PC-9 (cell line): ENCODE measurements at regions of chr5 and their contacts with region 1.

Region 1: GRCh38 chr5:26245321-26245720 is 793.1 kb downstream of the CDH9 start:
- DNase-seq: no peak
- H3K4me3 ChIP-seq: no peak overlapping the region
- H3K27ac ChIP-seq: no peak overlapping the region
- H3K4me1 ChIP-seq: no peaks in the 10 kb centered on the region
- H3K27me3 ChIP-seq: no peaks in the 10 kb centered on the region
- CTCF ChIP-seq: no peak

Region 2: DNA sequence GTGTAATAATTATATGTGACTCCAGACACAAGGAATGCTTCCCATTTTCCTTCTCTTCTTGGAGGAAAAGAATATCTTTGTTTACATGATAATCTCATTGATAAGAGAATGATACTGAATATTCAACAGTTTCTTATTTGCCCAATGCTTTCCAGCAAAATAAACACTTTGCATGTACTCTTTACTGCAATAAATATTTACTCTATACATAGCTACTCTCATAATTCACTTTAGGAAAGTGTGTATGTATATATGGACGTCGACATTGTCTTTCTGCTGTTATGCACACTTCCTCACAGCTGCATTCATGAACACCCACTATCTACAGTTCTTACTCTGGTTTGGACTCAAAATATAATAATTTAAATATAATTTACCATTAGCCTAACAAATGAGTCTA is 983.1 kb before region 1 on chr5:
- CTCF ChIA-PET with region 1: no interaction called
- POLR2A ChIA-PET with region 1: interaction called, 13 read pairs
- intact Hi-C with region 1: no loop called
- DNase-seq: no peak
- H3K4me3 ChIP-seq: no peak overlapping the region
- H3K27ac ChIP-seq: no peak overlapping the region
- H3K4me1 ChIP-seq: no peaks in the 10 kb centered on the region
- H3K27me3 ChIP-seq: no peaks in the 10 kb centered on the region
- CTCF ChIP-seq: no peak

Region 3: DNA sequence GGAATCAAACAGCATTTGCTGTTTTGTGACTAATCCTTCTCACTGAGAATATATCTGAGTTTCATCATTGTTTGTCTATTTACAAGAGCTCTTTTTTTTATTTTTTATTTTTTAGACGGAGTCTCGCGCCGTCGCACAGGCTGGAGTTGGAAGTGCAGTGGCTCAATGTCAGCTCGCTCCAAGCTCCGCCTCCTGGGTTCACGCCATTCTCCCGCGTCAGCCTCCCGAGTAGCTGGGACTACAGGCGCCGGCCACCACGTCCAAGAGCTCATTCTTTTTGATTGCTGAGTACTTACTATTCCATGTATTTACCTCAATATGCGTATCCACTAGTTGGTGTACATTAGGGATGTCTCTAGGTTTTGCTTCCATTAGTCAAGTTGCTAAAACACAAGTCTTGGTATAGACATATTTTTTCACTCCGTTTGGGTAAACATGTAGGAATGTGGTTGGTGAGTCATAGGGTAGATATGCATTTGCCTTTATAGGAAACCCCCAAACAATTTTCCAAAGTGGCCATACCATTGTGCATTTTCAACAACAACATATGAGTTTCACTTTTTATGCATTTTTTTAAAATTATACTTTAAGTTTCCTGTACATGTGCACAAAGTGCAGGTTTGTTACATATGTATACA is 595.6 kb before region 1 on chr5:
- CTCF ChIA-PET with region 1: no interaction called
- POLR2A ChIA-PET with region 1: no interaction called
- intact Hi-C with region 1: loop called (anchors 5 kb)
- DNase-seq: no peak
- H3K4me3 ChIP-seq: no peak overlapping the region
- H3K27ac ChIP-seq: no peak overlapping the region
- H3K4me1 ChIP-seq: no peaks in the 10 kb centered on the region
- H3K27me3 ChIP-seq: no peaks in the 10 kb centered on the region
- CTCF ChIP-seq: no peak

Region 4: GRCh38 chr5:26181582-26181981 is 63.7 kb before region 1 on chr5:
- CTCF ChIA-PET with region 1: no interaction called
- POLR2A ChIA-PET with region 1: no interaction called
- intact Hi-C with region 1: no loop called
- DNase-seq: no peak
- H3K4me3 ChIP-seq: no peak overlapping the region
- H3K27ac ChIP-seq: no peak overlapping the region
- H3K4me1 ChIP-seq: no peaks in the 10 kb centered on the region
- H3K27me3 ChIP-seq: no peaks in the 10 kb centered on the region
- CTCF ChIP-seq: no peak